ENCODE measurements at regions of chr16 and their contacts with region 1.

Region 1: DNA sequence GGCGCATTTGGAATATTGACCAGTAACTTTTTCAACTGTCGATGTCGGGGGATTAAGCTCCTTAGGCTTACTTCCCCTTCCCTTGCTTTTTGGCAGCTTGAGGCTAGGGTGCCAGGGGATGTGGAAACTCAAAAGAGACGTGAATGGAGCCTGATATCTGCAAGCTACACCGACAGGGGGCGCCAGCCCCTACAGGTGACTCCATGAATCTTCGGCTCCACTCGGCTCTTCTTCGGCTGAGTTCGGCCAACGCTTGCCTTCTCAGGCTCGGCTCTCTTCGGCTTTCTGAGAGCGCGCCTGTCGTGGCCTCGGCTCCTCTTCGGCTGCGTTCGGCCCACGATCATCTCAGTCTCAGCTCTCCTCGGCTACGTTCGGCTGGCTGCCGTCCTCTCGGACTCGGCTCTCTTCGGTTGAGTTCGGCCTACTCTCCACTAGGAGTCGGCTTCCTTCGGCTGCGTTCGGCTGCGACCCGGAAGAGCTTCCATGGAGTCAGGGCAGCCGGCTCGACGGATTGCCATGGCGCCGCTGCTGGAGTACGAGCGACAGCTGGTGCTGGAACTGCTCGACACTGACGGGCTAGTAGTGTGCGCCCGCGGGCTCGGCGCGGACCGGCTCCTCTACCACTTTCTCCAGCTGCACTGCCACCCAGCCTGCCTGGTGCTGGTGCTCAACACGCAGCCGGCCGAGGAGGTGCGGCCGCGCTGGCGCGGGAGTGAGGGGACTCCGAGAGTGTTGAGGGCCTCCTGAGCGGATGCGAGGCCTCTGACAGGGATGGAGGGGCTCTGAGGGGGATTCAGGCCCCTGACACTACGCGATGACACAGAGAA is at the start of gene ERCC4:
- DNase-seq: peak; percentile 99
- H3K4me3 ChIP-seq: peak within 1 kb of the TSS; percentile 98
- H3K27ac ChIP-seq: peak within 1 kb of the TSS; percentile 66
- H3K27me3 ChIP-seq: no peaks in the 10 kb centered on the region
- CTCF ChIP-seq: peak; percentile 94
- polyA plus RNA-seq, gene ERCC4: 9.8 and 11.4 TPM in 2 replicates

Region 2: DNA sequence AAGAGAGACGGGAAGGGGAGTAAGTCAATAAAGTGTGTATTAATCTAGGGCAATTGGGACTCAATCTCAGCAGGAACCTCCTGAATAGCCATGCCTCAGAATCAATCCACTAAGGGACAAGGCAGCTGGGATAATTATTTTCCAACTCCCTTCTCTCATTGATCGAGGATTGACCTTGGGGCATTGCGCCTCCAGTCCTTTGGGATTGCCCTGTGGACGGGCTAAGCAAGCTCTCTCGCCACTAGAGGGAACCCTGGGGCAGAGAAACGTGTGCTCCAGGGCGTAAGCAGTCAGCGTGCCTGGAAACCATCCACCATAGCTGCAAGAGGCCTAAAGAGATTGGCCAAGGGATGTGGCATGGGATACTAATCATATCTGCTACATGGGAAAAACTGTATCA is 53.8 kb before region 1 on chr16:
- CTCF ChIA-PET with region 1: interaction called, 59 read pairs
- POLR2A ChIA-PET with region 1: no interaction called
- DNase-seq: peak; percentile 43
- H3K4me3 ChIP-seq: no peak overlapping the region
- H3K27ac ChIP-seq: no peak overlapping the region
- H3K27me3 ChIP-seq: no peaks in the 10 kb centered on the region
- CTCF ChIP-seq: peak; percentile 86

Region 3: GRCh38 chr16:13909872-13910303 is 10.0 kb before region 1 on chr16:
- CTCF ChIA-PET with region 1: interaction called, 66 read pairs
- POLR2A ChIA-PET with region 1: no interaction called
- DNase-seq: peak; percentile 47
- H3K4me3 ChIP-seq: no peak overlapping the region
- H3K27ac ChIP-seq: no peak overlapping the region
- H3K27me3 ChIP-seq: peaks cover 11% of the 10 kb centered on the region
- CTCF ChIP-seq: no peak

Region 4: DNA sequence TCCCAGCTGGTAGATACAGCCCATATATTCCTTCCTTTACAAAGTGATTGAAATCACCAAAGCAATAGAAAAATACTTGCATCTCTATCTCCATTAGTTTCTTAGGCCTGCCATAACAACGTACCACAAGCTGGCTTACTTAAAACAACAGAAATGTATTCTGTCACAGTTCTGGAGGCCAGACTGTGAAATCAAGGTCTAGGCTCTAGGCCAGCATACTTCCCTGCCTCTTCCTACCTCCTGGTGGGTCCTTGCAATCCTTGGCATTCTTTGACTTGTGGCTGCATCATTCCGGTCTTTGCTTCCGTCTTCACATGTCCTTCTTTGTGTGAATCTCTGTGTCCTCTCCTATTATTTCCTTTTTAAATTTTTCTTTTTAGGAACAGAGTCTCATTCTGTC is 62.6 kb after region 1 on chr16:
- CTCF ChIA-PET with region 1: no interaction called
- POLR2A ChIA-PET with region 1: no interaction called
- DNase-seq: no peak
- H3K4me3 ChIP-seq: no peak overlapping the region
- H3K27ac ChIP-seq: no peak overlapping the region
- H3K27me3 ChIP-seq: no peaks in the 10 kb centered on the region
- CTCF ChIP-seq: no peak

Region 5: GRCh38 chr16:14003074-14003570 is 83.2 kb after region 1 on chr16:
- CTCF ChIA-PET with region 1: interaction called, 20 read pairs
- POLR2A ChIA-PET with region 1: no interaction called
- DNase-seq: no peak
- H3K4me3 ChIP-seq: peak overlapping the region; percentile 45
- H3K27ac ChIP-seq: peak overlapping the region; percentile 52
- H3K27me3 ChIP-seq: no peaks in the 10 kb centered on the region
- CTCF ChIP-seq: no peak; the same call in 1 of the 2 replicates

Region 6: GRCh38 chr16:14202697-14203096 is 282.8 kb after region 1 on chr16:
- CTCF ChIA-PET with region 1: interaction called, 13 read pairs
- POLR2A ChIA-PET with region 1: no interaction called
- DNase-seq: no peak
- H3K4me3 ChIP-seq: no peak overlapping the region
- H3K27ac ChIP-seq: no peak overlapping the region
- H3K27me3 ChIP-seq: no peaks in the 10 kb centered on the region
- CTCF ChIP-seq: peak; percentile 39

Region 7: DNA sequence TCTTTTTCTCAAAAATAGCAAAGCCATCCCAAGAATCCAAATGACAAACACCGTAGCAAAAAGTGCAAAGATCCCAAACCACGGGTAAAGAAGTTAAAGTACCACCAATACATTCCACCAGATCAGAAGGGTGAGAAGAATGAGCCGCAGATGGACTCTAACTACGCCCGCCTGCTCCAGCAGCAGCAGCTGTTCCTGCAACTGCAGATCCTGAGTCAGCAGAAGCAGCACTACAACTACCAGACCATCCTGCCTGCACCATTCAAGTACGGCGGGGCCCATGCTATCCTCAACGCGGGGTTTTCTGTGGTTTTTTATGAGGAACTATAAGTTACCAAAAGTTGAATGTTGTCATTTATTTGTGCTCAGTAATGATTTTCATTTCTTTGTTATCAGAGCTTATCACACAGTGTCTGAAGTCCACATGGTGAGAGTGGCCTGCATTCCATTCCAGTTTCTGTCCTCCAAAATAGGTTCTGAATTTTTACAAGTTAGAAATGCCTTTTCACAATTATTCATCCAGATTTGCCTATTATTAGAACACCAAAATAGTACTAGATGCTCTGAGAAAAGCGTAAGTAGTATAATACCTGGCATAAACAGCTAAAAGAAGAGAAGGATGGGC is 320.4 kb after region 1 on chr16:
- CTCF ChIA-PET with region 1: interaction called, 30 read pairs
- POLR2A ChIA-PET with region 1: no interaction called
- DNase-seq: no peak
- H3K4me3 ChIP-seq: no peak overlapping the region
- H3K27ac ChIP-seq: no peak overlapping the region
- H3K27me3 ChIP-seq: no peaks in the 10 kb centered on the region
- CTCF ChIP-seq: no peak

Region 8: DNA sequence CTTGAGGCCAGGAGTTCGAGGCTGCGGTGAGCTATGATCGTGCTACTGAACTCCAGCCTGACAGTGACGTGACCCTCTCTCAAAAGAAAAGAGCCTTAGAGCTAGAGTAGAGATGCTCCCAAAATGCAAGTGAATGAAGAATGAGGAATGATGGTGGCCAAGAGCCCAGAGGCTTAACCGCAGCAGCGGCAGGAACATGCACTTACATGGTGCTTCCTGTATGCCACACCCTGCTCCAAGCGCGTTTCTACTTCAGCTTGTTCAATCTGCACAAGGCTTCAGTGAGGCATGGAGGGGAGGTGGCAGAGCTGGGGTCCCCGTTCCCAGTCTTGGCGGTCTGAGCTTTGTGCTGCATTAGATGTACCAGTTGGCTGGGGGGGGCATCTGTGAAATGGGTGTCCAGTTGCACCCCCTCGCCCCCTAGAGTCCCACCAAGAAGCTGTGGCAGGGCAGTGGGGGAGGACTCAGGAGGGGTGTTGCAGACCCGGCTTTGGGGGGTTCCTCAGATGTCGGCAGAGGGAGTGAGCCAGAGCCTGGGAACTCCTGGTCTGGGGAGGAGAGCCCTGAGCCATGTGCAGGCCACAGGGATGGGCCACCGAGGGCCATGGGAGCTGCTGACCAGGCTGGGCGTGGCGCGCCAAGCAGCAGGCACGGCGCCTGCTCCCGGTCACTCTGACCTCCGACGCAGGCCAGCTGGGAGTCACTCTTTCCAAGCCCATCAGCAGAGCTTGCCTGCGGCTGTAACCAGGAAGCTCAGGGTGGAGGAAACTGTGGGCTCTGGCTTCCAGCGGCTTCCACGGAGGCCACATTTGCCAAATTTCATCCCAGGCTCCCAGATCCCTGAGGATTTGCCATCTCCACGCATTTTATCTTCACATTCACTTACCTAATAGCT is 450.1 kb after region 1 on chr16:
- CTCF ChIA-PET with region 1: no interaction called
- POLR2A ChIA-PET with region 1: no interaction called
- DNase-seq: no peak
- H3K4me3 ChIP-seq: no peak overlapping the region
- H3K27ac ChIP-seq: no peak overlapping the region
- H3K27me3 ChIP-seq: no peaks in the 10 kb centered on the region
- CTCF ChIP-seq: no peak

Region 9: DNA sequence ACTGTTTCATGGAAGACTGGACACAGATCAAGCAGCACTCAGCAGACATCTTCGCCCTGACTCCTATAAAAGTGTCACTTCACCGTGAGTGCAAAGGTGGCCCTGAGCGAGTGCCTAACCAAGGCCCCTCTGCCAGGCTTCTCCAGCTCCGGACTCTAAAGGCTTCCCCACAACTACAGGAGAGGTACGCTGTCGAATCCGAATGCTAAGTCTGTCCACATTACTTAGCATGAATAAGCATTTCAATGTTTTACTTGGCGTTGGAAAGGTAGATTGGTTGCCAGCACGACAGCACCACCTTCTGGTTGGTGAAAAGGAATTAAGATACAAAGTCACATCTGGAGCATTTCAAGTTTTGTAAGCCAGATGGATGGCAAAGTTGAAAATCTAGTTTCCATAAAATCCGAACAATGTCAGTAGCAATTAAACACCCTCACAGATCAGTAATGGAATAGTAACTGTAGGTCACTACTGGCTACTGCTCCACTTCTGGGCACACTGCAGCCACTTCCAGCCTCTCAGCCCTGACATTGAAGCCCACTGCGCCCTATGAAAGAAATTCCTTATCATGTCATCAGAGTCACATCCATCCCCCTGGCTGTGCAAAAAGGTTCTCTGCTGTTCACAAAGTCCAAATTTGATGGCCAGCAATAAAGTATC is 609.2 kb after region 1 on chr16:
- CTCF ChIA-PET with region 1: interaction called, 12 read pairs
- POLR2A ChIA-PET with region 1: no interaction called
- DNase-seq: peak; percentile 83
- H3K4me3 ChIP-seq: peak overlapping the region; percentile 17; the same call in 1 of the 2 replicates
- H3K27ac ChIP-seq: peak overlapping the region; percentile 73
- H3K27me3 ChIP-seq: no peaks in the 10 kb centered on the region
- CTCF ChIP-seq: peak; percentile 77